Activated B cell treated with CpG ODN at 0.5 μM for 24 hours (primary cell): ENCODE measurements at regions of chr4 and their contacts with region 1.

Region 1: GRCh38 chr4:85557016-85557901 is 82.3 kb downstream of the ARHGAP24 start:
- DNase-seq: peak; percentile 83
- ATAC-seq: peak; percentile 84
- H3K4me3 Mint-ChIP-seq: peak overlapping the region; percentile 61
- H3K27ac Mint-ChIP-seq: peak overlapping the region; percentile 96
- H3K4me1 Mint-ChIP-seq: peaks cover 80% of the 10 kb centered on the region
- H3K27me3 Mint-ChIP-seq: no peaks in the 10 kb centered on the region
- CTCF ChIP-seq: no peak

Region 2: DNA sequence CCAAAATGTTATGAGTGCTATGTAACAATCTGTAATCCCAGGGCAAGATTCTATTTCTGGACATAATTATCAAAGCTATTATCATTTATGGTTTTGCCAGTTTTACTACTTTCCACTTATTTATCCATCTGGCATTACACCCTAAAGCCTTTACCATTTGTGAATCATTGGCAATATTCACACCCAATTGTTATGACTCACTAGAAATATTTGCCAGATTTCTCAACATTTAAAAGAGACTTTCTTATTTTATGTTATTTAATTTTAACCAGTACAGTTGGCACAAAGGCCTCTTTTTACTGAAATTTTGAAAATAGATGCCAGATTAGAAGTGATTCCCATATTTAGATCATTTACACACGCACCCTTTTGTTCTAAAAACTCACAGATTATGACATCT is 348.1 kb before region 1 on chr4:
- CTCF ChIA-PET with region 1: no interaction called
- POLR2A ChIA-PET with region 1: no interaction called
- intact Hi-C with region 1: no loop called
- DNase-seq: no peak
- ATAC-seq: no peak
- H3K4me3 Mint-ChIP-seq: no peak overlapping the region
- H3K27ac Mint-ChIP-seq: no peak overlapping the region
- H3K4me1 Mint-ChIP-seq: no peaks in the 10 kb centered on the region
- H3K27me3 Mint-ChIP-seq: no peaks in the 10 kb centered on the region
- CTCF ChIP-seq: no peak

Region 3: DNA sequence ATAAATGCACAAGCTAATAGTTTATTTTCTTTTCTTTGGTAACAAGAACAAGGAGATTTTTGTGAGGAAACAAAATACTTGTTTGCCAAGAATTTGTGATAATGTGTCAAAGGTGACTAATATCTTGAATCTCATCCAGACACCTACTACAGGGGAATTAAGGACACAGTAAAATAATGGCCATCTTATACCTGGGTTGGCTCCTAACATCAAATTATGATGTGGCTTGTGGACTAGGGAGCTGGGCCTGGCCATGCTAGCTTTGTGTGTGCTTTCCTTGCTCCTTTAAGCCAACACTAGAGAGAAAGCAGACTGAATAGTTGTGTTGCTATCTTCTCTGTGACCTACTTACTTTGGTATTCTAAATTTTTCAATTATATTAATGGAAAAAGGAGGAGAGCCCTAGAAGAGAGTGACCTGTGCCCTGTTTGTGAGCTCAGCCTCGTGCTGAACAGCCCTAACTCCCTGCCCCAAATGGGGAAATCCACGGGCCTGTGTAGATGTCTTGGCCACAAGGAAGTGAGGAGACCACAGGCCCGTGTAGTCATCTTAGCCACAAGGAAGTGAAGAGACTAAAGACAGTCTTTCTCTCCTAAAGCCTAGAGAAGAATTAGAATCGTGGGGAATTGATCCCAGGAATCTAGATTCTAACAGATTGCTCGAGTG is 59.1 kb before region 1 on chr4:
- CTCF ChIA-PET with region 1: no interaction called
- POLR2A ChIA-PET with region 1: interaction called, 12 read pairs
- intact Hi-C with region 1: loop called (anchors 2 kb)
- DNase-seq: peak; percentile 35
- ATAC-seq: peak; percentile 98
- H3K4me3 Mint-ChIP-seq: peak overlapping the region; percentile 44
- H3K27ac Mint-ChIP-seq: peak overlapping the region; percentile 81
- H3K4me1 Mint-ChIP-seq: peaks cover 75% of the 10 kb centered on the region
- H3K27me3 Mint-ChIP-seq: no peaks in the 10 kb centered on the region
- CTCF ChIP-seq: no peak

Region 4: GRCh38 chr4:85531560-85532341 is 25.5 kb before region 1 on chr4:
- CTCF ChIA-PET with region 1: no interaction called
- POLR2A ChIA-PET with region 1: no interaction called
- intact Hi-C with region 1: loop called (anchors 2 kb)
- DNase-seq: no peak
- ATAC-seq: peak; percentile 52
- H3K4me3 Mint-ChIP-seq: peak overlapping the region; percentile 5
- H3K27ac Mint-ChIP-seq: peak overlapping the region; percentile 3
- H3K4me1 Mint-ChIP-seq: peaks cover 49% of the 10 kb centered on the region
- H3K27me3 Mint-ChIP-seq: no peaks in the 10 kb centered on the region
- CTCF ChIP-seq: no peak

Region 5: GRCh38 chr4:85658766-85659439 is 101.6 kb after region 1 on chr4:
- CTCF ChIA-PET with region 1: interaction called, 4 read pairs
- POLR2A ChIA-PET with region 1: interaction called, 3 read pairs
- intact Hi-C with region 1: loop called (anchors 1 kb)
- DNase-seq: no peak
- ATAC-seq: no peak
- H3K4me3 Mint-ChIP-seq: peak overlapping the region; percentile 5
- H3K27ac Mint-ChIP-seq: peak overlapping the region; percentile 89
- H3K4me1 Mint-ChIP-seq: peaks cover 52% of the 10 kb centered on the region
- H3K27me3 Mint-ChIP-seq: no peaks in the 10 kb centered on the region
- CTCF ChIP-seq: no peak

Region 6: GRCh38 chr4:85672116-85672515 is 114.9 kb after region 1 on chr4:
- CTCF ChIA-PET with region 1: no interaction called
- POLR2A ChIA-PET with region 1: no interaction called
- intact Hi-C with region 1: no loop called
- DNase-seq: no peak
- ATAC-seq: no peak
- H3K4me3 Mint-ChIP-seq: peak overlapping the region; percentile 17
- H3K27ac Mint-ChIP-seq: peak overlapping the region; percentile 46
- H3K4me1 Mint-ChIP-seq: peaks cover 79% of the 10 kb centered on the region
- H3K27me3 Mint-ChIP-seq: no peaks in the 10 kb centered on the region
- CTCF ChIP-seq: no peak

Region 7: GRCh38 chr4:85725721-85726170 is 168.5 kb after region 1 on chr4:
- CTCF ChIA-PET with region 1: no interaction called
- POLR2A ChIA-PET with region 1: interaction called, 6 read pairs
- intact Hi-C with region 1: loop called (anchors 1 kb)
- DNase-seq: peak; percentile 35
- ATAC-seq: peak; percentile 90
- H3K4me3 Mint-ChIP-seq: peak overlapping the region; percentile 51
- H3K27ac Mint-ChIP-seq: peak overlapping the region; percentile 92
- H3K4me1 Mint-ChIP-seq: peaks cover 53% of the 10 kb centered on the region
- H3K27me3 Mint-ChIP-seq: no peaks in the 10 kb centered on the region
- CTCF ChIP-seq: no peak

Region 8: DNA sequence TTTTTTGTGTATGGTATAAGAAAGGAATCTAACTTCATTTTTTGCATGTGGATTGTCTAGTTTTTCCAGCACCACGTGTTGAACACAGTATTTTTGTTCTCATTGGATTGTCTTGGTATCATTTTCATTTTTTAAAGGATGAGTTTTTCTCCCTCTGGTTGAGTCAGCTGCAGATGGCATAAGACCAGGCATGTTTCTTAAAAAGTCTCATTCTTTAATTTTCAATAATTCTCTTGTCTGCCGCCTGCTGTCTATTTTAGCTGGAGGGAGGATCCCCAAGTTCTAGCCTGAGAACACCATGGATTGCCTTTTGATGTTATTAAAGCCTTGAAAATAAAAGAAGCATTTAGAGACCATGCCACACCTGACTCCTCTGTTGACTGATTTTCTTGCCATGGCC is 181.5 kb after region 1 on chr4:
- CTCF ChIA-PET with region 1: no interaction called
- POLR2A ChIA-PET with region 1: no interaction called
- intact Hi-C with region 1: no loop called
- DNase-seq: no peak
- ATAC-seq: no peak
- H3K4me3 Mint-ChIP-seq: no peak overlapping the region
- H3K27ac Mint-ChIP-seq: no peak overlapping the region
- H3K4me1 Mint-ChIP-seq: peaks cover 89% of the 10 kb centered on the region
- H3K27me3 Mint-ChIP-seq: no peaks in the 10 kb centered on the region
- CTCF ChIP-seq: no peak

Region 9: GRCh38 chr4:85968945-85969819 is 411.9 kb after region 1 on chr4:
- CTCF ChIA-PET with region 1: no interaction called
- POLR2A ChIA-PET with region 1: no interaction called
- intact Hi-C with region 1: loop called (anchors 5 kb)
- DNase-seq: no peak
- ATAC-seq: no peak
- H3K4me3 Mint-ChIP-seq: no peak overlapping the region
- H3K27ac Mint-ChIP-seq: no peak overlapping the region
- H3K4me1 Mint-ChIP-seq: peaks cover 10% of the 10 kb centered on the region
- H3K27me3 Mint-ChIP-seq: no peaks in the 10 kb centered on the region
- CTCF ChIP-seq: no peak

Region 10: DNA sequence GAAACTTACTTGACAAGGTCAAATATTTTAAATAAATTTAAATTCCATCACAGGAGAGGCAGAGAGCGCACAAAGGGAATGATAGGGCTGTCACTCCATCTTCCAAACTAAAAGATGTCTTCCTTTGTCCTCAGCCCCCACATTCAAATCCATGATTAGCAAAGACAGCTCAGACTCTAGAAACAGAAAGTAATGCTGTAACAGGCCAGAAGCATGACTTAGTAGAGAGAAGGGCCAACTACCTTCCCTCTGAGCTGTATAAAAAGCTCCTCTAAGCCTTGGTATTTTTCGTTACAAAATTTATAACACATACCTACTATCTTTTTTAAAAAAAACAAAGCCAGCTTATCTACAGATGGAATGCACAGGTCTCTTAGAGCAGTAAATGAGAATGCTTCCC is 595.2 kb after region 1 on chr4:
- CTCF ChIA-PET with region 1: no interaction called
- POLR2A ChIA-PET with region 1: no interaction called
- intact Hi-C with region 1: no loop called
- DNase-seq: no peak
- ATAC-seq: no peak
- H3K4me3 Mint-ChIP-seq: no peak overlapping the region
- H3K27ac Mint-ChIP-seq: no peak overlapping the region
- H3K4me1 Mint-ChIP-seq: no peaks in the 10 kb centered on the region
- H3K27me3 Mint-ChIP-seq: no peaks in the 10 kb centered on the region
- CTCF ChIP-seq: no peak